CD4-positive, alpha-beta memory T cell (primary cell): ENCODE measurements at regions of chr10 and their contacts with region 1.

Region 1: GRCh38 chr10:32980558-32981468 is 22.8 kb upstream of the ITGB1 start:
- DNase-seq: peak; percentile 77 to 94 (median 80)
- H3K4me3 ChIP-seq: peak overlapping the region; percentile 30 to 87
- H3K4me3 Mint-ChIP-seq: peak overlapping the region; percentile 93 to 98 (median 95)
- H3K27ac ChIP-seq: peak overlapping the region; percentile 84
- H3K27ac Mint-ChIP-seq: peak overlapping the region; percentile 92 to 99 (median 98)
- H3K4me1 ChIP-seq: peaks cover 40% of the 10 kb centered on the region
- H3K4me1 Mint-ChIP-seq: peaks cover 25 to 39% (median 34%) of the 10 kb centered on the region in 4 donors
- H3K27me3 ChIP-seq: no peaks in the 10 kb centered on the region
- H3K27me3 Mint-ChIP-seq: no peaks in the 10 kb centered on the region

Region 2: DNA sequence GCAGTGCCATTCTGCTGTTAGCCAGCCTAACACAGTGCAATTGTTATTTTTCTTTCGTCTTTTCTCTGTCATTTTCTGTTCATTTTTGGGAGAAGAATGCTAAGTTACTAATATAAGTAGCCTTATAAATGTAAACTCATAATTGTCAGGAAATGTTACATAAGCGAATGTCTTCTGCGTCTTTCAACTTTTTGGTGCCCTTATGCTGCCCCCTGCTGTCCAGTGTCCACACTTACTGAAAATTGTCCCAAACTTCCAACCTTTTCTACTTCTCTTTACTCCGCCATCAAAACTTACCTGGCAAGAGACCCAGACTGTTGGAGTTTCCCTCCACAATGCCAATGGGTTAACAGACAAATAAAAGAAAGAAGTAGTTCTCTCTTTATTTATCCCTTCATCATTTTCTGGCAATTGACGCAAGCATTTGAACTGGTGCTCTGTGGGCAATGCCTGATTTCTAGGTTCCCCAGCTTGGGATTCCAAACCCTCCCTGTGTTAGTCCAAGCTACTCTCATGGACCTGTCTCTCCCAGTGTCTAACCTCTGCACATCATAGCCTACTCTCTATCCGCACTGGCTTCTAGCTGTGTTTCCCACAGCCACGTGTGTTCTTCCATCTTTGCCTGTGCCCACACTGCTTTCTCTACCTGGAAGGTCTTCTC is 612.9 kb before region 1 on chr10:
- CTCF ChIA-PET with region 1: no interaction called
- POLR2A ChIA-PET with region 1: no interaction called
- intact Hi-C with region 1: no loop called
- DNase-seq: peak; percentile 72 to 77 (median 75)
- H3K4me3 ChIP-seq: no peak overlapping the region
- H3K4me3 Mint-ChIP-seq: peak overlapping the region in 7 of 8 donors; percentile 31 to 76 (median 70)
- H3K27ac ChIP-seq: peak overlapping the region; percentile 33
- H3K27ac Mint-ChIP-seq: peak overlapping the region; percentile 62 to 92 (median 84)
- H3K4me1 ChIP-seq: peaks cover 83% of the 10 kb centered on the region
- H3K4me1 Mint-ChIP-seq: peaks cover 47 to 84% (median 64%) of the 10 kb centered on the region in 4 donors
- H3K27me3 ChIP-seq: no peaks in the 10 kb centered on the region
- H3K27me3 Mint-ChIP-seq: no peaks in the 10 kb centered on the region

Region 3: DNA sequence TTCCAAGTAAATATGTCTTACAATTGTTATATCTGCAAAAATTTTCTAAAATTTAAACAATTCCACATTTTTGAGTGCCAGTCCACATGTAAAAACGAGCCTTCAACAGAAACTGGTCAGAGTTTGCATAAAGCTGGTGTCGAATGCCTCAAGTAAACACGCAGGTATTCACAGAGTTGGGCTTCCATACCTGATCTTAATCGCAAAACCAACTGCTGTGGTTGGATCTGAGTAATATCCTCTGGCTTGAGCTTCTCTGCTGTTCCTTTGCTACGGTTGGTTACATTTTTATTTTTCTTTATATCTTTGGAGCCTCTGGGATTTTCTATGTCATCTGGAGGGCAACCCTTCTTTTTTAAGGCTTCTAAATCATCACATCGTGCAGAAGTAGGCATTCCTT is 51.2 kb before region 1 on chr10:
- CTCF ChIA-PET with region 1: interaction called, 3 read pairs
- POLR2A ChIA-PET with region 1: interaction called, 11 read pairs
- intact Hi-C with region 1: no loop called
- DNase-seq: peak; percentile 18 to 80 (median 35)
- H3K4me3 ChIP-seq: no peak overlapping the region
- H3K4me3 Mint-ChIP-seq: peak overlapping the region in 7 of 8 donors; percentile 37 to 81 (median 59)
- H3K27ac ChIP-seq: no peak overlapping the region
- H3K27ac Mint-ChIP-seq: peak overlapping the region in 6 of 7 donors; percentile 1 to 90 (median 69)
- H3K4me1 ChIP-seq: peaks cover 72% of the 10 kb centered on the region
- H3K4me1 Mint-ChIP-seq: peaks cover 43 to 90% (median 61%) of the 10 kb centered on the region in 4 donors
- H3K27me3 ChIP-seq: no peaks in the 10 kb centered on the region
- H3K27me3 Mint-ChIP-seq: no peaks in the 10 kb centered on the region

Region 4: DNA sequence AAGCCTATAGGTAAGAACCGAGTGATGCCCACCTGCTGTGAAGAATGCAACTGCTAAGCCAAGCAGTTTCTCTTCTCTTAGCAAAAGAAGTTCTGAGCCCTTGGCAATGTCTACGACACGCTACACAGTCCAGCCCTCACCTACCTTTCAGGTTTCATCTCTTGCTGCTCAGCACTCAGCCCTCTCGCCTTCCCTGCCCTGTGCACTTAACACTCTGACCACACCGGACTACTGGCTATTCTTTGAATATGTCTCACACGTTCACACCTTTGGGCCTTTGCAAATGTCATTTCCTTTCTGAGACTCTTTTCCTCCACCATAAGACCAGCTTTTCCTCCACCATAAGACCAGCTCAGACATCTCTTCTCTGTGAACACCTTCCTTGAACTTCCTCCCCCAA is 44.2 kb after region 1 on chr10:
- CTCF ChIA-PET with region 1: no interaction called
- POLR2A ChIA-PET with region 1: interaction called, 4 read pairs
- intact Hi-C with region 1: loop called (anchors 5 kb)
- DNase-seq: no peak
- H3K4me3 ChIP-seq: no peak overlapping the region
- H3K4me3 Mint-ChIP-seq: peak overlapping the region in 4 of 8 donors; percentile 3 to 67 (median 10)
- H3K27ac ChIP-seq: no peak overlapping the region
- H3K27ac Mint-ChIP-seq: peak overlapping the region in 6 of 7 donors; percentile 13 to 85 (median 65)
- H3K4me1 ChIP-seq: peaks cover 63% of the 10 kb centered on the region
- H3K4me1 Mint-ChIP-seq: peaks cover 47 to 73% (median 55%) of the 10 kb centered on the region in 4 donors
- H3K27me3 ChIP-seq: no peaks in the 10 kb centered on the region
- H3K27me3 Mint-ChIP-seq: no peaks in the 10 kb centered on the region

Region 5: GRCh38 chr10:33139181-33139646 is 158.4 kb after region 1 on chr10:
- CTCF ChIA-PET with region 1: no interaction called
- POLR2A ChIA-PET with region 1: interaction called, 10 read pairs
- intact Hi-C with region 1: no loop called
- DNase-seq: peak; percentile 94 to 97 (median 95)
- H3K4me3 ChIP-seq: peak overlapping the region; percentile 10 to 54
- H3K4me3 Mint-ChIP-seq: peak overlapping the region; percentile 57 to 81 (median 75)
- H3K27ac ChIP-seq: peak overlapping the region; percentile 84
- H3K27ac Mint-ChIP-seq: peak overlapping the region; percentile 98 to 100 (median 100)
- H3K4me1 ChIP-seq: peaks cover 92% of the 10 kb centered on the region
- H3K4me1 Mint-ChIP-seq: peaks cover 63 to 93% (median 80%) of the 10 kb centered on the region in 4 donors
- H3K27me3 ChIP-seq: no peaks in the 10 kb centered on the region
- H3K27me3 Mint-ChIP-seq: no peaks in the 10 kb centered on the region